Activated CD8-positive, alpha-beta T cell treated with anti-CD3 and anti-CD28 coated beads for 36 hours (primary cell): ENCODE measurements at regions of chr2 and their contacts with region 1.

Region 1: DNA sequence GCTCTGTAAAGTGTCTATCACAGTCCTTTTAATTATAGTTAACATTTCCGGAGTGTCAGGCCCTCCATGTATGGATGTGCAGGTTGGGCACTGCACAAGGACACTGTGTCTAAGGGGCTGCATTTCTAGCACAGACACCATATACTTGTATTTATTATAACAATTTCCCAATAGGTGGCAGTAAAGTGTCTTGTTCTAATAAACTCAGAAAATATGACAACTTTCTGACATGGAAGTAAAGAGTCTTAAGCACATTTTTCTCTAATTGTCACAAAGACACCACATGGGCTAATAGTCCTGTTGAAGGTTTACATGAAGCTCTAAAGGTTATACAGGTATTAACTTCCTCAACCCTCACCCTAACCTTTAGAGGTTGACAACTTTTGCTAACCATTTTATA is 156.6 kb downstream of the DYSF start:
- DNase-seq: no peak
- ATAC-seq: peak; percentile 37
- H3K4me3 Mint-ChIP-seq: no peak overlapping the region
- H3K27ac Mint-ChIP-seq: no peak overlapping the region
- H3K4me1 Mint-ChIP-seq: peaks cover 2% of the 10 kb centered on the region
- H3K27me3 Mint-ChIP-seq: peaks cover 4% of the 10 kb centered on the region
- CTCF ChIP-seq: peak; percentile 26

Region 2: DNA sequence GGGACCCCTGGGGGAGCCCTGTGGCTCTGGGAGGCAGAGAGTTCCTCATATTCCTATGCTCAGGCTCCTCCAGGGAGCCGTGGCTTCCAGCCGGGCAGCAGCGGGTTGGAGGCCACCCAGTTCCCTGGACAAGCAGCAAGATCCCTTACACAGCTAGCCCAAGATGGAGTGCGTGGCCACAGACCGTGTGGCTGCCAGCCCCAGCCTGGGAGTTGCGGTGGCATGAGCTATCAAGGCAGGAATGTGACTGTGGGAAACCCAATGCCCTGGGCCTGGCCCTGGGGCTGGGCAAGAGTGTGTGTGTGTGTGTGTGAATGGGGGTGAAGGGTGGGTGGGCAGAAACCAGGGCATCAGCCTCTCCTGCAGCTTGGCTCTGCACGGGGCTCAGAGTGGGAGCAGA is 26.1 kb before region 1 on chr2:
- CTCF ChIA-PET with region 1: no interaction called
- POLR2A ChIA-PET with region 1: no interaction called
- intact Hi-C with region 1: no loop called
- DNase-seq: no peak
- ATAC-seq: no peak
- H3K4me3 Mint-ChIP-seq: no peak overlapping the region
- H3K27ac Mint-ChIP-seq: no peak overlapping the region
- H3K4me1 Mint-ChIP-seq: no peaks in the 10 kb centered on the region
- H3K27me3 Mint-ChIP-seq: no peaks in the 10 kb centered on the region
- CTCF ChIP-seq: no peak

Region 3: GRCh38 chr2:71798266-71799012 is 188.5 kb after region 1 on chr2:
- CTCF ChIA-PET with region 1: no interaction called
- POLR2A ChIA-PET with region 1: no interaction called
- intact Hi-C with region 1: loop called (anchors 5 kb)
- DNase-seq: peak; percentile 26
- ATAC-seq: peak; percentile 53
- H3K4me3 Mint-ChIP-seq: no peak overlapping the region
- H3K27ac Mint-ChIP-seq: no peak overlapping the region
- H3K4me1 Mint-ChIP-seq: no peaks in the 10 kb centered on the region
- H3K27me3 Mint-ChIP-seq: peaks cover 2% of the 10 kb centered on the region
- CTCF ChIP-seq: peak; percentile 57

Region 4: DNA sequence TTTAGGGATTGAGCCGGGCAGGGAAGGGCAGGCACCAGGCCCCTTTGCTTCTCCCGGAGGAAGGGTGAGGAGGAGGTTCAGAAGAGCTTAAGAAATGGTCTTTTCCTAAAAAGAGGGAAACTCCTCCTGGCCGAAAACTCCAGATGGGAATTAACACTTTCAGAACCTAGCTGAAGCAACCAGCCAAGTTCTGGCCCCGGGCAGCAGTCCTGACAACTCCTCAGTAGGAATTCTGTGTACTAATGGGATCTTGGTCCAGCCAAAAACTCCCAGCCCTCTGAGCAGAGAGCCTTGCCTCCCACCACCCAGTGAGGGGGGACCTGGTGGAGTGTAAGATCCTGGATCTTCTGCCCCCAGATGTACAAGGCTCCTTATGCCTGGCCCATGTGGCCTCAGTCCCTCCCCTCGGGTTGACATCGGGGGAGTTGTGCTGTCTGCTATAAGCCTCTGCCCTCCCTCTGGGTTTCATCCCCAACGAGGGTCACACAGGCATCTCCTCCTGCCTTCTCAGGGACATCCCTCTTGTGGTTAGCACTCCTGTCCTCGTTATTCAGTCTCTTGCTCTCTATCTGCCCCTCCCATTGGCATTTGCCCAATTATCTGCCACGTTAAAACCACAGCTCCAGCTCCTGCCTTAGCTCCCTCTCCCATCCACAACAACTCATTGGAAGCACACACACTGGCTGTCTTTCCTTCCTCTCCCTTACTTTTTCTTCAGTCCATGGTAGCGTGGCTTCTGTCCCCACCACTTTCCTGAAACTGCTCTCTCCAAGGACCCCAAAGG is 353.1 kb after region 1 on chr2:
- CTCF ChIA-PET with region 1: no interaction called
- POLR2A ChIA-PET with region 1: no interaction called
- intact Hi-C with region 1: no loop called
- DNase-seq: no peak
- ATAC-seq: no peak
- H3K4me3 Mint-ChIP-seq: no peak overlapping the region
- H3K27ac Mint-ChIP-seq: no peak overlapping the region
- H3K4me1 Mint-ChIP-seq: no peaks in the 10 kb centered on the region
- H3K27me3 Mint-ChIP-seq: peaks cover 7% of the 10 kb centered on the region
- CTCF ChIP-seq: no peak